Psoas muscle (tissue), 8 donors: ENCODE measurements at regions of chr1 and their contacts with region 1.

Region 1: DNA sequence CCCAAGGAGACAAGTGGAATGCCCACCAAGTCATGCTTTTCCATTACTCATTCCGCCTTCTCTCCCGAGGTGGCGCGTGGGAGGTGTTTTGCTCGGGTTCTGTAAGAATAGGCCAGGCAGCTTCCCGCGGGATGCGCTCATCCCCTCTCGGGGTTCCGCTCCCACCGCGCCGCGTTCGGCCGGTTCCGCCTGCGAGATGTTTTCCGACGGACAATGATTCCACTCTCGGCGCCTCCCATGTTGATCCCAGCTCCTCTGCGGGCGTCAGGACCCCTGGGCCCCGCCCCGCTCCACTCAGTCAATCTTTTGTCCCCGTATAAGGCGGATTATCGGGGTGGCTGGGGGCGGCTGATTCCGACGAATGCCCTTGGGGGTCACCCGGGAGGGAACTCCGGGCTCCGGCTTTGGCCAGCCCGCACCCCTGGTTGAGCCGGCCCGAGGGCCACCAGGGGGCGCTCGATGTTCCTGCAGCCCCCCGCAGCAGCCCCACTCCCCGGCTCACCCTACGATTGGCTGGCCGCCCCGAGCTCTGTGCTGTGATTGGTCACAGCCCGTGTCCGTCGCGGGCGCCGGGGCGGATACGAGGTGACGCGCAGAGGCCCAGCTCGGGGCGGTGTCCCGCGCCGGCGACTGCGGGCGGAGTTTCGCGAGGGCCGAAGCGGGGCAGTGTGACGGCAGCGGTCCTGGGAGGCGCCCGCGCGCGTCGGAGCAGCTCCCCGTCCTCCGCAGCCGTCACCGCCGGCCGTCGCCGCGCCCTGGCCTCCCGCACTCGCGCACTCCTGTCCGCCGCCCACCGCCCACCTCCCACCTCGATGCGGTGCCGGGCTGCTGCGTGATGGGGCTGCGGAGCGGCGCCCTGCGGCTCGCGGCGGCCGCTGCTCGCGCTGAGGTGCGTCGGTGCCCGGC is at the start of gene KIF1B:
- DNase-seq: peak; percentile 99 to 100
- ATAC-seq: peak; percentile 83 to 93 (median 88)
- H3K4me3 ChIP-seq: peak within 1 kb of the TSS; percentile 84
- H3K27ac ChIP-seq: peak within 1 kb of the TSS; percentile 99
- H3K4me1 ChIP-seq: peaks cover 23% of the 10 kb centered on the region
- H3K27me3 ChIP-seq: no peaks in the 10 kb centered on the region
- CTCF ChIP-seq: peak; percentile 97
- total RNA-seq, gene KIF1B: 221 to 391 (median 338) TPM

Region 2: GRCh38 chr1:9929431-9930385 is 280.4 kb before region 1 on chr1:
- intact Hi-C with region 1: no loop called
- DNase-seq: no peak
- ATAC-seq: no peak
- H3K4me3 ChIP-seq: no peak overlapping the region
- H3K27ac ChIP-seq: no peak overlapping the region
- H3K4me1 ChIP-seq: no peaks in the 10 kb centered on the region
- H3K27me3 ChIP-seq: no peaks in the 10 kb centered on the region
- CTCF ChIP-seq: no peak

Region 3: DNA sequence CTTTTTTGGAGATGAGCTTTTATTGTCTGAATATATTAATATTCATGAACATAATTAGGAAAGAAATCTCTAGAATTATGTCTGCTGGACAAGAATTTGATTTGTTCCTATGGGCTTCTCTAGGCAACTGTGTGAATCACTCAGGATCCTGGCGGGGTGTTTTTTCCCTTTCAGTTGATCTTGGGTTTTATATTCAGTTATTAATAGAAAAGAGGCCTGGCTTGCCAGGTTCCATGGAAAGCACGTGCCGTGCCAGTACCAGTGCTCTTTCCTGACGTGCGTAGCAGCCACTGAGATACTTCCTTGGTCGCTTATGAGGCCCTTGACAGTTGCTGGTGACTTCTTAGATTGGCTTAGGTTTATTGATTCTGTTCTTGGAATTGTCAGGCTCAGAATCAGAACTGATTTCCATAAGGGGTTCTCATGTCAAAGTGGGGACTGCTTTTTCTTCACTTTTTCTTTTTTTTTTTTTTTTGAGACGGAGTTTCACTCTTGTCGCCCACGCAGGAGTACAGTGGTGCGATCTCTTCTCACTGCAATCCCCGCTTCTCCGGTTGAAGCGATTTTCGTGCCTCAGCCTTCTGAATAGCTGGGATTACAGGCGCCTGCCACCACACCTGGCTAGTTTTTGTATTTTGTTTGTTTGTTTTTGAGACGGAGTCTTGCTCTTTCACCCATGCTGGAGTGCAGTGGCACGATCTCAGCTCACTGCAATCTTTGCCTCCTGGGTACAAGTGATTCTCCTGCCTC is 48.4 kb before region 1 on chr1:
- intact Hi-C with region 1: loop called in 1 of 2 experiments (anchors 5 kb)
- DNase-seq: peak; percentile 43 to 82
- ATAC-seq: peak; percentile 94 to 96 (median 96)
- H3K4me3 ChIP-seq: no peak overlapping the region
- H3K27ac ChIP-seq: peak overlapping the region; percentile 86
- H3K4me1 ChIP-seq: peaks cover 23% of the 10 kb centered on the region
- H3K27me3 ChIP-seq: no peaks in the 10 kb centered on the region
- CTCF ChIP-seq: no peak

Region 4: DNA sequence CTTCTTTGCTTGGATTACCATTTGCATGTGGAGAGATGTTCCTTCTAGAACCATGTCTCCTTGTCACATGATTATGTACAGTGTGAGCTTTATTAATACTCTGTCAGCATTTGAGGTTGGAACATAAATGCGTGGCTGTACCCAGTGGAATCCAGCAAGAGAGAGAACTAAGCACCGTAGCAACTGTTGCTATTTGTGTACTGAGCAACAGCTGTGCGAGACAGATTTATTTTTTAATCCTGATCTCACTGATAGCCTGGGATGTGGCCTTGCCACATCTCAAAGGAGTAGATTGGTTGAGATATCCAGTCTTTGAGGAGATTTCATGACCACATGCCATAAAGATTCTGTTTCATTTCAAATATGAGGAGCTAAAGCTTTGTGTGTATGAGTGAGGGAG is 43.6 kb after region 1 on chr1:
- intact Hi-C with region 1: loop called (anchors 2 to 5 kb)
- DNase-seq: no peak
- ATAC-seq: peak; percentile 89 to 93 (median 91)
- H3K4me3 ChIP-seq: peak overlapping the region; percentile 19
- H3K27ac ChIP-seq: peak overlapping the region; percentile 89
- H3K4me1 ChIP-seq: peaks cover 90% of the 10 kb centered on the region
- H3K27me3 ChIP-seq: no peaks in the 10 kb centered on the region
- CTCF ChIP-seq: no peak

Region 5: DNA sequence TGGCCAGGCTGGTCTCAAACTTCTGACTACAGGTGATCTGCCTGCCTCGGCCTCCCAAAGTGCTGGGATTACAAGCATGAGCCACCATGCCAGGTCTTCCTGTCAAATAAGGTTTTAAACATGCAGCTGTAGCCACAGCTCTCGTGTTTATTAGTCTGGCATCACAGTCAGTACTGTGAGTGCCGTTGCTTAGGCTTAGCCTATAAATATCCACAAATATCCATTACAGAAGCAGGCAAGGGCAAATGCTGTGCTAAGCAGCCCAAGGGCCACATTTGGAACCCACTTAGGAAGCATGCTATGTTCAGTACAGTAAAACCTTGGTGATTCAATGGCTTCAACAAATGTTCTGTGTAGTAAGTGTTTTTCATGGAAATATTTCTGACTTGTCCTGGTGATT is 76.1 kb after region 1 on chr1:
- intact Hi-C with region 1: loop called in 1 of 2 experiments (anchors 5 kb)
- DNase-seq: peak in 1 of 2 donors; percentile 69
- ATAC-seq: peak; percentile 85 to 93 (median 90)
- H3K4me3 ChIP-seq: no peak overlapping the region
- H3K27ac ChIP-seq: peak overlapping the region; percentile 87
- H3K4me1 ChIP-seq: peaks cover 45% of the 10 kb centered on the region
- H3K27me3 ChIP-seq: no peaks in the 10 kb centered on the region
- CTCF ChIP-seq: no peak

Region 6: DNA sequence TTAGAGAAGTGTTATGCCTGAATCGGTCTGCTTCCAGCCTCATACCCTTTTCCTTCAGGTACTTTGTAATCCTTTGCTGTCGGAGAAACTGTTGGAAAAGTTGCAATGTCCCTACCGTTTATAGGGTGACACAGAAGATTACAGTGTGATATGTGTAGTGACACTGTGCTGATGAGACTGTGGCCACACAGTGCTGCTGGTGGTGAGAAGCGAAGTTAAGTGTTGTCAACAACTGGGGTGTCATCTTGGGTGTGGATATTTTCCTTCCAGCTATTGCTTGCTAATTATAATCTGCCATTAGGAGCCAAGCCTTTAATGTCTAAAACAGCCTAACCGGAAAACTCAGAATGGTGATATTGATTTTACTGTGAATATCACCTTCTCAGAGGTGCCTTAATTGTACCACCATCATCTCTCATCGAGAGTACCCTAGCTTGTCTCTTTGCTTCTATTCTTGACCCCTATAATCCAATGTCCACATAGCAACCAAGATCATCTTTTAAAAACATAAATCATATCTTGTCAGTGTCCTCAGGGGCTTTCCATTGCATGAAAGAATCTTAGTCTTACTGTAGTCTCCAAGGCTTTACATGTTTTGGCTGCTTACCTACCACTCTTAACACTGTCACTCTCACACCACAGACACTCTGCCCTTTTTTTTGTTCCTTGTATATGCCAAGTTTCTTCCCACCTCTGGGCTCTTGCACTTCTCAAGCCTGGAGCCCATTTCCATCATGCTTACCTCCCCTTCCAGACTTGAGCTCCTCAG is 99.3 kb after region 1 on chr1:
- intact Hi-C with region 1: loop called in 1 of 2 experiments (anchors 5 kb)
- DNase-seq: no peak
- ATAC-seq: peak in 3 of 4 donors; percentile 31 to 36 (median 31)
- H3K4me3 ChIP-seq: no peak overlapping the region
- H3K27ac ChIP-seq: peak overlapping the region; percentile 88
- H3K4me1 ChIP-seq: peaks cover 70% of the 10 kb centered on the region
- H3K27me3 ChIP-seq: no peaks in the 10 kb centered on the region
- CTCF ChIP-seq: no peak

Region 7: DNA sequence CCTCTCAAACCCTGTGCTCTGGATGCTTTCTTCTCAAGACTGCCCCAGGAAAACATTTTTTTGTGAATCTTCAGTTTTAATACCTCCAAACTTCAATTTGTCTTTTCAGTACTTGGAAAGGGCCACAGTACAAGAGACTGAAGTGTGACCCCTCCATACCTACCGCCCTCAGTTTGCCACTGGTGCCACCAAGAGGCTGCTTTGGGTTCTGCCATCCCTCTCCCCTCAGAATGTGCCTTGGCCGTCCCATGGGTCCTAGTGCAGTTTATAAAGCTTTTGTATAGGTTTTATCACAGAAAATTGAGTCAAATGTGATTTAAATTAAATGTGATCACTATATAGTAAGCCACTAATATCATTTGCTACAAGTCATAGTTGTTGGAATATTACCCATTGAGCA is 127.9 kb after region 1 on chr1:
- intact Hi-C with region 1: loop called in 1 of 2 experiments (anchors 2 kb)
- DNase-seq: peak; percentile 27 to 64
- ATAC-seq: peak; percentile 73 to 92 (median 86)
- H3K4me3 ChIP-seq: no peak overlapping the region
- H3K27ac ChIP-seq: no peak overlapping the region
- H3K4me1 ChIP-seq: no peaks in the 10 kb centered on the region
- H3K27me3 ChIP-seq: no peaks in the 10 kb centered on the region
- CTCF ChIP-seq: peak; percentile 68